ENCODE measurements at regions of chr10 and their contacts with region 1.

Region 1: DNA sequence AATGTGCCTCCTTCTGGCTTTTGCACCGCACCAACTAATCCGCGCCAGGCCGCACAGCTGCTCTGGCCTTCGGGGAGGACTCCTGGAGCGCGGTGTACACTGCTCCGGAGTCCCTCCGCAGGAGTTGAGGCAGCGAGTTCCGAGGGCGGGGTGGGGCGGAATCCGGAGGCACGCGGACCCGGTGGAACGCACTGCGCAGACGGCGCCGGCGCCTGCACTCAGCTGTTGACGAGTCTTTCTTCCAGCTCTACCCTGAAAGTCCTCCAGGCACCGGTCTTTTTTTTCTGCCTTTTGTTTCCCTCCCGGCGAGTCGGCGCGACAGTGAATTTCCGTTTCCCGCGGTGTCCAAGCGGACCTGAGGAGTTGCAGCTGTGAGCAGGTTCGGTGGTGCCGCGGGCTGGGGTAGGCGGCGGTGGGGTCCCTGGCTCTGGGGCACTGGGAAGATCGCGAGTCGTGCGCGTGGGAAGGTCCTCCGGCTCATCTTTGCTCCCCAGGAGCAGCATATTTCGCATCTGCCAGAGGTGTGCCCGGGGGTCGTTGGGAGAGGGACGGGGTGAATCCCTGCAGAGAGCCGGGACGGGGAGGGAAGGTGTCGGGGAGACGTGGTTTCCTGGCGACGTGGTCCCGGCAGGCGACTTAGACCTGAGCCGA is 44.1 kb downstream of the SFTPD start:
- ATAC-seq: peak; percentile 96 to 99 (median 98)
- H3K4me3 ChIP-seq: peak overlapping the region; percentile 48 to 79 (median 50)
- H3K27ac ChIP-seq: no peak overlapping the region
- H3K4me1 ChIP-seq: no peaks in the 10 kb centered on the region

Region 2: DNA sequence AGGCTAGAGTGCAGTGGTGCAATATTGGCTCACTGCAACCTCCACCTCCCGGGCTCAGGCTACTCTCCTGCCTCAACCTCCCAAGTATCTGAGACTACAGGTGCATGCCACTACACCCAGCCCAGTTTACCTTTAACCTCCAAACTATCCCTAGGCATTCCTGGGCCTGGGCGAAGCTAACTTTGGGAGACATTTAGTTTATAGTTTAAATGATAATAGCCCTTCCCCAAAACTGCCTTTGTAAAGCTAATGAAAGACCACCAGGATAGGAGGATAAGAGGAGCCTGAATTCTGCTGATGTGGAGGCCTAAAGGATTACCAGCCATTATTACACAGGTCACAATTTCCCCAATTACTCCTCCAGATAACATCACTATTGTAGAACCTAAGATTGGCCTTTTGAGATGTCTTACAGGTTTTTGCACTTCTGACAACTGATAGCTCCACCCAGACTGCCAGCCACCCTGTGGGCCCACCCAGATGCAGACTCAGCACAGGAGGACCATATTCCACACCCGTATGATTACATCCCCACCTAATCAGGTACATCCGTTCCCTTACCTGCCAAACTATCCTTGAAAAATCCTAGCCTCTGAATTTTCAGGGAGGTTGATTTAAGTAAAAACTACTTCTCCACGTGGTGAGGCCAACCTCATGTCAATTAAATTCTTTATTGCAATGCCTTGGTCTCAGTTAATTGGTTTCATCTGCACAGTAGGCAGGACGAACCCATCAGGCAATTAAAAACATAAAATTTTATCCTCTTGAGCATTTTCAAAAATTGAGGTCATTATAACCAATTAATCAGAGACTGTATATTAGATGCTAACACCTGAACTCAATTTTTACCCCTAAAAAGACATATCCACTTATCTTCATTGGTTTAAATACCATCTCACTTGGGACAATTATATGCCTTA is 111.4 kb after region 1 on chr10:
- in situ Hi-C with region 1: loop called in 1 of 9 experiments (anchors 25 kb)
- ATAC-seq: no peak
- H3K4me3 ChIP-seq: no peak overlapping the region
- H3K27ac ChIP-seq: no peak overlapping the region
- H3K4me1 ChIP-seq: no peaks in the 10 kb centered on the region

Region 3: GRCh38 chr10:80081931-80082750 is 177.3 kb after region 1 on chr10:
- in situ Hi-C with region 1: no loop called
- ATAC-seq: no peak
- H3K4me3 ChIP-seq: no peak overlapping the region
- H3K27ac ChIP-seq: no peak overlapping the region
- H3K4me1 ChIP-seq: peaks cover 3 to 8% of the 10 kb centered on the region in 2 donors